Mammary epithelial cell (primary cell): ENCODE measurements at regions of chr7 and their contacts with region 1.

Region 1: DNA sequence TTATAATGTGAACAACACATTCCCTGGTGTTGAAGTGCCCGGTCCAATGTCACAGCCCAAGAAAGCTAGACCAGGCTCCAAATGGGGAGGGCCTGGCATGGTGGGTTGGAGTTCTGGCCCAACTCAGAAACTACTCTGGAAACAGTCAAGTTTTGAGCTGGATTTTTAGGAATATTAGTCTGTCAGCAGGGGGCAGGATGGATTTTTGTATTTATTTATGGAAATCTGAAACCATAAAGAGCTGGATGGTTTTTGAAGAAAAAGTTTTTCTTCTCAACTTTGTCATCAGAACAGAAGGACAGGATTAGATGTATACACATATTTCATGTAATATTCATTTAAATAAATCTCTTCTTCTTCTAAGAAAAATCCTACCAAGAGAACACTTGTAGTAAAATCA is 97.5 kb downstream of the POU6F2 start:
- DNase-seq: no peak
- H3K4me3 ChIP-seq: no peak overlapping the region
- H3K27ac ChIP-seq: no peak overlapping the region
- H3K4me1 ChIP-seq: no peaks in the 10 kb centered on the region
- H3K27me3 ChIP-seq: no peaks in the 10 kb centered on the region
- CTCF ChIP-seq: peak in 1 of 2 donors; percentile 8

Region 2: GRCh38 chr7:38796626-38797501 is 278.3 kb before region 1 on chr7:
- CTCF ChIA-PET with region 1: no interaction called
- dilution Hi-C with region 1: no loop called
- in situ Hi-C with region 1: no loop called
- intact Hi-C with region 1: loop called (anchors 5 kb)
- DNase-seq: peak; percentile 39
- H3K4me3 ChIP-seq: no peak overlapping the region
- H3K27ac ChIP-seq: no peak overlapping the region
- H3K4me1 ChIP-seq: peaks cover 12% of the 10 kb centered on the region
- H3K27me3 ChIP-seq: no peaks in the 10 kb centered on the region
- CTCF ChIP-seq: peak; percentile 68 to 71

Region 3: DNA sequence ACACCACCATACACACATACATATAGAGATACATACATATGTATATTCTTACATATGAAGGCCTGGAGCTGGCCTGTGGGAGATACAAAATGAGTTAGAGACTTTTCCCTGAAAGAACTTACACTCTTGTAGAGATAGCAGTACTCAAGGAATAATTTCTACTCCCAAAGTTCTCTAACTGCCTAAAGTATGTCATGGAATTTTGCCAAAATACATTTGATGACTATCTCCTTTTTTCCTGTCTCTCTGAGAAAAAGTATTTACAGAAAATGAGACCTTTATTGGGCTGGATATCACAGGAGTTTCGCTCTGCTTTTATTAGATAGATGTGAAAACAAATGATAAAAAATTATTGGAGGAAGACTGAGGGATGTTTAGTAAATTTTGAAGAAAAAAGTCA is 122.6 kb after region 1 on chr7:
- CTCF ChIA-PET with region 1: no interaction called
- dilution Hi-C with region 1: no loop called
- in situ Hi-C with region 1: no loop called
- intact Hi-C with region 1: no loop called
- DNase-seq: no peak
- H3K4me3 ChIP-seq: no peak overlapping the region
- H3K27ac ChIP-seq: no peak overlapping the region
- H3K4me1 ChIP-seq: no peaks in the 10 kb centered on the region
- H3K27me3 ChIP-seq: no peaks in the 10 kb centered on the region
- CTCF ChIP-seq: no peak

Region 4: GRCh38 chr7:39527296-39527695 is 452.1 kb after region 1 on chr7:
- CTCF ChIA-PET with region 1: no interaction called
- dilution Hi-C with region 1: no loop called
- in situ Hi-C with region 1: no loop called
- intact Hi-C with region 1: loop called (anchors 5 kb)
- DNase-seq: no peak
- H3K4me3 ChIP-seq: no peak overlapping the region
- H3K27ac ChIP-seq: no peak overlapping the region
- H3K4me1 ChIP-seq: no peaks in the 10 kb centered on the region
- H3K27me3 ChIP-seq: no peaks in the 10 kb centered on the region
- CTCF ChIP-seq: no peak